Activated CD8-positive, alpha-beta memory T cell treated with anti-CD3 and anti-CD28 coated beads, Interleukin-2, amount 10 ng/mL, durations not matched to agents 7 days and 5 days (primary cell): ENCODE measurements at regions of chrX and their contacts with region 1.

Region 1: DNA sequence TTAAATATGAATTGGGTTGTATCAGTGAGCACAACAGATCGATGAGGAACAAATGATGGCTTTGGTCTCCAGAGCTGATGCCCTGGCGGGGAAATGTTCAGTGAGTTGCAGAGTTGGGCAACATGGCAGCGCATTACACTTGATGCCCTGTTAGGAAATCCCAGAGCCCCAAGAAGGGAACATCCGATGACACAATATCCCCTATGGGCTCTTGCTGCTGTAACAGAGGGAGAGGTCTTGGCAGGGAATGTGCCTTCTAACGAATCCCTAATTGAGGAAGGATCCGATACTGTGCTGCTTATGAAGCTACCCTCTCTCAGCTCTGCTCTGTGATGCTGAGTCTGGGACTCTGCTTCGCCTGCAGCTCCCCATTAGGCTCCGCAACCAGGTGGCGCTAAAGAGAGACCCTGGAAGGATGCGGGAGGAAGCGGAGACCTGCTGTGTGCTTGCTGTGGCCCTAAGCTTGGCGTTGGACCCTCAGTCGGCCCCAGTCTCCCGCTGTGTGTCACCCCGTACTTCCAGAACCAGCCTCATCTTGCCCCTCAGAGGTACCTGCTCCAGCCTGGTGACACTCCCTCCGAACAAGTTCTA is 38.9 kb downstream of the PDHA1 start:
- DNase-seq: peak; percentile 72
- ATAC-seq: peak; percentile 47
- H3K4me3 Mint-ChIP-seq: no peak overlapping the region
- H3K27ac Mint-ChIP-seq: no peak overlapping the region
- H3K4me1 Mint-ChIP-seq: peaks cover 2% of the 10 kb centered on the region
- H3K27me3 Mint-ChIP-seq: peaks cover 5% of the 10 kb centered on the region

Region 2: GRCh38 chrX:19372170-19372546 is 10.5 kb before region 1 on chrX:
- CTCF ChIA-PET with region 1: interaction called, 16 read pairs
- DNase-seq: peak; percentile 74
- ATAC-seq: peak; percentile 89
- H3K4me3 Mint-ChIP-seq: peak overlapping the region; percentile 67
- H3K27ac Mint-ChIP-seq: peak overlapping the region; percentile 7
- H3K4me1 Mint-ChIP-seq: peaks cover 8% of the 10 kb centered on the region
- H3K27me3 Mint-ChIP-seq: no peaks in the 10 kb centered on the region